GM12878 (cell line): ENCODE measurements at regions of chr5 and their contacts with region 1.

Region 1: GRCh38 chr5:151164686-151165392 is 7.3 kb upstream of the ANXA6 start:
- DNase-seq: peak; percentile 83
- ATAC-seq: peak; percentile 98
- H3K4me3 ChIP-seq: no peak overlapping the region
- H3K27ac ChIP-seq: no peak overlapping the region
- H3K4me1 ChIP-seq: peaks cover 6% of the 10 kb centered on the region; the same call in 1 of the 2 replicates
- H3K27me3 ChIP-seq: no peaks in the 10 kb centered on the region
- CTCF ChIP-seq: peak; percentile 87 to 98 (median 92); a peak in 5 of 6 replicates
- EP300 ChIP-seq: no peak
- POLR2A ChIP-seq: no peak
- RAD21 ChIP-seq: peak; percentile 100

Region 2: DNA sequence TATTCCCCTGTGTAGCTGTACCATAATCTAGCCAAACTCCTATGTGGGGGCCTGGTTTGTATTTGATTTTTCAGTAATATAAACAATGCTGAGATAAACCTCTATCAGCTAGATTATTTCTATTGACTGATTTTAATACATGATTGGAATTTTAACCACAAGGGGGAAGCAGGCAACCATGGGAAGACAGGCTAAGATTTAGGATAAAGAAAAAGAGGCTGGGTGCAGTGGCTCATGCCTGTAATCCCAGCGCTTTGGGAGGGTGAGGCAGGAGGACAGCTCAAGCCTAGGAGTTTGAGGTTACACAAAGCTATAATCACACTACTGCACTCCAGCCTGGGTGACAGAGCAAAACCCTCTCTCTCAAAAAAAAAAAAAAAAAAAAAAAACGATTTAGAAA is 162.6 kb before region 1 on chr5:
- CTCF ChIA-PET with region 1: interaction called, 13 read pairs
- POLR2A ChIA-PET with region 1: interaction called, 4 read pairs
- RAD21 ChIA-PET with region 1: interaction called, 13 read pairs
- SMC1A ChIA-PET with region 1: interaction called, 9 read pairs
- in situ Hi-C with region 1: no loop called
- intact Hi-C with region 1: loop called (anchors 1 kb)
- DNase-seq: no peak
- ATAC-seq: no peak
- H3K4me3 ChIP-seq: no peak overlapping the region
- H3K27ac ChIP-seq: no peak overlapping the region
- H3K4me1 ChIP-seq: no peaks in the 10 kb centered on the region
- H3K27me3 ChIP-seq: no peaks in the 10 kb centered on the region
- CTCF ChIP-seq: no peak; a peak in 1 of 6 replicates
- EP300 ChIP-seq: no peak
- POLR2A ChIP-seq: no peak
- RAD21 ChIP-seq: peak; percentile 42

Region 3: GRCh38 chr5:151080623-151081430 is 84.0 kb before region 1 on chr5 and contains the start of gene TNIP1:
- CTCF ChIA-PET with region 1: interaction called, 11 read pairs
- POLR2A ChIA-PET with region 1: interaction called, 5 read pairs
- RAD21 ChIA-PET with region 1: interaction called, 7 read pairs
- SMC1A ChIA-PET with region 1: interaction called, 10 read pairs
- in situ Hi-C with region 1: no loop called
- intact Hi-C with region 1: no loop called
- DNase-seq: no peak
- ATAC-seq: peak; percentile 78
- H3K4me3 ChIP-seq: peak within 1 kb of the TSS; percentile 89
- H3K27ac ChIP-seq: peak within 1 kb of the TSS; percentile 90
- H3K4me1 ChIP-seq: peaks cover 44% of the 10 kb centered on the region
- H3K27me3 ChIP-seq: no peaks in the 10 kb centered on the region
- CTCF ChIP-seq: no peak
- EP300 ChIP-seq: no peak; a peak in 1 of 4 replicates
- POLR2A ChIP-seq: peak; percentile 89
- RAD21 ChIP-seq: no peak
- polyA plus RNA-seq, gene TNIP1: 4.4 to 13.7 TPM

Region 4: GRCh38 chr5:151150471-151151262 is 14.2 kb before region 1 on chr5:
- CTCF ChIA-PET with region 1: interaction called, 1,107 read pairs
- POLR2A ChIA-PET with region 1: interaction called, 5 read pairs
- RAD21 ChIA-PET with region 1: interaction called, 14 read pairs
- SMC1A ChIA-PET with region 1: interaction called, 1,132 read pairs
- in situ Hi-C with region 1: no loop called
- intact Hi-C with region 1: no loop called
- DNase-seq: peak; percentile 50
- ATAC-seq: peak; percentile 51
- H3K4me3 ChIP-seq: peak overlapping the region; percentile 57
- H3K27ac ChIP-seq: peak overlapping the region; percentile 89
- H3K4me1 ChIP-seq: peaks cover 62% of the 10 kb centered on the region
- H3K27me3 ChIP-seq: no peaks in the 10 kb centered on the region
- CTCF ChIP-seq: no peak
- EP300 ChIP-seq: no peak
- POLR2A ChIP-seq: peak; percentile 70
- RAD21 ChIP-seq: no peak

Region 5: DNA sequence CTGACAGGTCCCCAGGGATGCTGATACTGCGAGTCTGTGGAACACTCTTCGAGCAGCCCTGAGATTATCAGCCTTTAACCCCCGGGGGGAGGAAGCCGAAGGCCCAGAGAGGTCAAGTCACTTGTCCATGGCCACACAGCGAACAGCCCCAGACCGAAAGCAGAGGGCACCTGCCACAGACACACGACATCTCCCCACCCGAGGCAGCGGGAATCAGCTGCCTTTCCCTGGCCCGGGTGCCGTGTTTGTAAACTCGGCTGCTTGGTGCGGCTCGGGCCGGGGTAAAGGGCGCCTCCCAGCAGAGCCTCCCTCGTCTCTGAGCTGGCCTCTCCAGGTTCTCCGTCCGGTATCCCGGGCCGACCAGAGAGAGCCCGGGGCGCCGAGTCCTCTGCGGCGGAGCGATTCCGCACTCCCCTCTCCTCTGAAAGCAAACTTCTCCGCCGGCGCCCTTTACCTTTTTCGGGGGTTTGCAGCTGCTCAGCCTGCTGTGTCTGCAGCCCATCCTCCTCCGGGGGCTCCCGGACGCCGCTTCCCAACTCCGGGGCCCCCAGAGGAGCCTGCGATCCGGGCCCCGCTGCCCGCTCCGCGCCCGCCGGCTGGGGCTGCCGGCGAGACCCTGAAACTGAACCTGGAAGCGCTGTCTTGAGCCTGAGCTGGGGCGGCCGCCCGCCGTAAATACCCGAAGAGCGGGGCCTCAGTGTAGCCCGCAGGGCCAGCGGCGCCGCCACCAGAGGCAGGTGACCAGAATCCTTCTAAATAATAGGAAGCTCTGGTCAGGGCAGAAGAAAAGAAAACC is 58.8 kb after region 1 on chr5 and contains the start of gene CCDC69:
- CTCF ChIA-PET with region 1: interaction called, 23 read pairs
- POLR2A ChIA-PET with region 1: interaction called, 4 read pairs
- RAD21 ChIA-PET with region 1: interaction called, 7 read pairs
- SMC1A ChIA-PET with region 1: interaction called, 12 read pairs
- in situ Hi-C with region 1: no loop called
- intact Hi-C with region 1: no loop called
- DNase-seq: no peak
- ATAC-seq: peak; percentile 82
- H3K4me3 ChIP-seq: peak within 1 kb of the TSS; percentile 97
- H3K27ac ChIP-seq: peak within 1 kb of the TSS; percentile 89
- H3K4me1 ChIP-seq: peaks cover 24% of the 10 kb centered on the region
- H3K27me3 ChIP-seq: no peaks in the 10 kb centered on the region
- CTCF ChIP-seq: no peak
- EP300 ChIP-seq: no peak
- POLR2A ChIP-seq: peak; percentile 80
- RAD21 ChIP-seq: 0 out of 2 replicates have a peak, but pooled peaks have one; percentile 16
- polyA plus RNA-seq, gene CCDC69: 13.5 to 21.4 TPM